ENCODE measurements at regions of chr18 and their contacts with region 1.

Region 1: DNA sequence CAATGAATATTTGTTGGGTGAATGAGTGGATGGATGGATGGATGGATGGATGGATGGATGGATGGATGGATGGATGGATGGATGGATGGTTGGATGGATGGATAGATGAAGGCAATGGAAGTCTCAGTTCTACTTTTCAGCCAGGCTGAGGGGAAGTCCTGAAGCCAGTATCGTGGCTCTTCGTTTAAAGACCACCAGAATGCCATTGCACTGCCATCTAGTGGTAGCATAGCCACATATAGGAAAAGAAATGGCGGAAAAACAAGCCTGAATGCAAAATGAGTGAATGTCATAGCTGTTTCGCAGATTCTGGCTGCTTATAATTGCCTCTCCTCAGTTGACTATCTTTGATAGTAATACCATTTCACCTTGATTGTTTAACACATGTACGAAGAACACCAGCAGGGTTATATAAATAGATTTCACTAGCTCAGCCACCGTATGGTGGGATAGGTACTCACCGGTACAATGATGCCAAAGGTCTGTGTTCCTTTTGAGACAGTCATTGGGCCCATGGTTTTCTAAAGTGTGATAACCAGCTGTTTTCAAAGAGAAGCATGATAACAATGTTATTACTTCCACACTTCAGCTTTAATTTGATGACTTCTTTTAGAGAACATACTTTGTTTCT is 62.3 kb upstream of the GREB1L start:
- DNase-seq: peak; percentile 45
- H3K4me3 ChIP-seq: no peak overlapping the region
- H3K27ac ChIP-seq: no peak overlapping the region
- H3K27me3 ChIP-seq: no peaks in the 10 kb centered on the region
- CTCF ChIP-seq: peak; percentile 91

Region 2: GRCh38 chr18:20971886-20972267 is 207.8 kb before region 1 on chr18:
- CTCF ChIA-PET with region 1: interaction called, 13 read pairs
- POLR2A ChIA-PET with region 1: no interaction called
- DNase-seq: no peak
- H3K4me3 ChIP-seq: no peak overlapping the region
- H3K27ac ChIP-seq: no peak overlapping the region
- H3K27me3 ChIP-seq: no peaks in the 10 kb centered on the region
- CTCF ChIP-seq: peak; percentile 64

Region 3: DNA sequence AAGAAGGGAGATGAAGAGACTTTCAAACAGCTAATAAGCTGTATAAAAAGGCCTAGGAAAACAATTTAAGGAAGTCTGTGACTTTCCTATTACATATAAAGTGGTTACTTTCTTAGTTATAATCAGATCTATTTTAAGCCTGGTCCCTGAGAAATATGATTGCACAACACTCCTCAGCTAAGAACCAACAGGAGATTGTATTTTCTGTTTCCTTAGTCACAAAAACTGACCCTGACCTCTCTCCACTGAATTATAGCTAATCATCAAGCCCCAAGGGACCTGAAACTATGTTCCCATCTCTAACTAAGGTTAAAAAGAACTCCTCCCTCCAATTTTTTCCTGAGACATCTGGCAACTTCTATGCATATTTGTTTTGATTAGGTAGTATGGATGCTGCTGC is 175.0 kb before region 1 on chr18:
- CTCF ChIA-PET with region 1: interaction called, 20 read pairs
- POLR2A ChIA-PET with region 1: no interaction called
- DNase-seq: peak; percentile 15
- H3K4me3 ChIP-seq: no peak overlapping the region
- H3K27ac ChIP-seq: no peak overlapping the region
- H3K27me3 ChIP-seq: no peaks in the 10 kb centered on the region
- CTCF ChIP-seq: no peak

Region 4: GRCh38 chr18:21117409-21118131 is 62.1 kb before region 1 on chr18:
- CTCF ChIA-PET with region 1: interaction called, 14 read pairs
- POLR2A ChIA-PET with region 1: no interaction called
- DNase-seq: peak; percentile 70
- H3K4me3 ChIP-seq: no peak overlapping the region
- H3K27ac ChIP-seq: peak overlapping the region; percentile 42
- H3K27me3 ChIP-seq: no peaks in the 10 kb centered on the region
- CTCF ChIP-seq: no peak

Region 5: DNA sequence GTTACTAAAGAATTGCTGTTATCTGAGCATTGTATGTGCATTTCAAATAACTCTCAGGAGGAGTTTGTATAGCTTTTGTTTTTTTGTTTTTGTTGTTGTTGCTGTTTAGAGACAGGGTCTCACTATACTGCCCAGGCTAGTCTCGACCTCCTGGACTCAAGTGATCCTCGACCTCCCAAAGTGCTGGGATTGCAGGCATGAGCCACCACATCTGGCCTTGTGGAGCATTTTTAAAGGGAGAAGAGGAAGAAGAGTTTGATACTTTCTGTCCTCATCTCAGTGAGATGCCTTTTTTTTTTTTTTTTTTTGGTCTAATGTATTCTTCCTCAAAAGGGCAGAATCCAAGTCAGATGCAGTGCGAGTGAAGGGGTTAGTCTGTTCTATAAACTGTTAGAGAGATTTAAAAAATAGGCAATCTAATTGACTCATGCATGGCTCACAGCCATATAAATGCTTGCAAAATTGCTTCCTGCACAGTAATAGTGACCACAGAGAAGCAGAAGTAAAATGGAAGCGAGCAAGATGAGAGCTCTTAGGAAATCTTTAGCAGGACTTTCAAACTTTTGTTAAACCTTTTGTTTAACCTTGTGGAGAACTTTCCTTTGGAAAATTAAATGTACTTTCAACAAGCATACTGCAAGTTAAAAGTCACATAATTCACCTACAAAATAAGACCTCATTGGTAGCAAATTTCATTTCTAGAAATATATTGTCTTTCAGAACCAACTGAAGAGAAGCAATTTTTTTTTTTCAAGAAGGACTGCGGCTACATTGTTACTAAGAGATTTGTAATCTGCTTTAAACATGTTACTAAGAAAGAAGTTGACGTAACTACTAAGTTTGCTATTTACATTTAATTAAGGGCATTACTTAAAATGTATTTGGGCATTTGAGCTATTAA is 15.8 kb before region 1 on chr18:
- CTCF ChIA-PET with region 1: interaction called, 15 read pairs
- POLR2A ChIA-PET with region 1: no interaction called
- DNase-seq: peak; percentile 80
- H3K4me3 ChIP-seq: peak overlapping the region; percentile 15; the same call in 1 of the 2 replicates
- H3K27ac ChIP-seq: peak overlapping the region; percentile 93
- H3K27me3 ChIP-seq: no peaks in the 10 kb centered on the region
- CTCF ChIP-seq: no peak

Region 6: GRCh38 chr18:21203842-21204241 is 24.1 kb after region 1 on chr18:
- CTCF ChIA-PET with region 1: no interaction called
- POLR2A ChIA-PET with region 1: no interaction called
- DNase-seq: no peak
- H3K4me3 ChIP-seq: no peak overlapping the region
- H3K27ac ChIP-seq: no peak overlapping the region
- H3K27me3 ChIP-seq: no peaks in the 10 kb centered on the region
- CTCF ChIP-seq: no peak

Region 7: GRCh38 chr18:21894619-21895367 is 715.1 kb after region 1 on chr18:
- CTCF ChIA-PET with region 1: no interaction called
- POLR2A ChIA-PET with region 1: no interaction called
- DNase-seq: no peak
- H3K4me3 ChIP-seq: no peak overlapping the region
- H3K27ac ChIP-seq: no peak overlapping the region
- H3K27me3 ChIP-seq: peaks cover 2% of the 10 kb centered on the region
- CTCF ChIP-seq: no peak

Measured in AG04450 (cell line).